WTC11 (cell line): ENCODE measurements at regions of chr1 and their contacts with region 1.

Region 1: DNA sequence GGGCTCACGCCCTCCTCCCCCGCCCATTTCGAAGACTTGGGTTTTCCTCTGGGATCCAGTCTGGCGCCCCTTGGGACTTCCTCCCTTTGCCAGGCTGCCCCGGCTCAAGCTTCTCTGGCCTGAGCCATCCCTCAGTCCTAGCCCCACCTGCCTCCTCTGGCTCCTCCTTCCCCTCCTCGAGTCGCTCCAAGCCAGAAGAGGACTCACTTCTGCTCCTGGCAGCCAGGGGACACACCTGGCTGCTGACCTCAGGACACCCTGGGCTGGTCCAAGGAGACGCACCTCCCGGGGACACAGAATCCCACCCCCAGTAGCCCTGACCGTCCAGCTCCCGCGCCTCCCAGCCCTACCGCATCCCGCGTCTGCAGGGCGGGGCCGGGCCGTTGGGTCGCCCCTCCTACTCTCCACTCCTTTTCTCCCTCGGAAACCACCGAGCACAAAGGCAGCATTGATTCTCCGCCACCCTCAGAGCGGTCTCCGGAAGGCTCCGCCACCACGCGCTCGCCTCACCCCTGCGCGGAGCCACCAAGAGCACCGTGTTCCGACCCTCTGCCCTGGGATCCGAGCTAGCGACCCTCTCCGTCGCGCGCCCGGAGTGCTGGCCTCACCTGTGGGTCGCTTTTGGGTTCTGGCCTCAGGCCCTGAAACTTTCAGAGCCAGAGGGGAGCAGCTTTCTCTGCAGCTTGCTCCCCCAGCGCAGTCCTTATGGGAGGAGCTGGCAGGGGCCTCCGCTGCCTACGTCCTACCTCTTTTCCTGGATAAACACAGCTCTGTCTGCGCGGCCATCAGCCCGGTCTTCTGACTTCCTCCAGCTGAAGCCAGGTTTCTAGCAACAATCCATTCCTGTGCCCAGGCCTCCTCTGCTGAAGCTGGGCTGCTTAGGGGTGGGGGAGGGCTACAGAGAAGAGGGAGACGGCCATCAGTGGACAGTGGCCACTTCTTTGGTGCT is at the start of gene C2CD4D:
- DNase-seq: peak; percentile 82
- ATAC-seq: peak; percentile 77
- H3K4me3 Mint-ChIP-seq: peak within 1 kb of the TSS; percentile 88
- H3K27ac Mint-ChIP-seq: peak within 1 kb of the TSS; percentile 96
- H3K4me1 Mint-ChIP-seq: peaks cover 26% of the 10 kb centered on the region
- H3K27me3 Mint-ChIP-seq: peaks cover 36% of the 10 kb centered on the region
- CTCF ChIP-seq: no peak
- total RNA-seq, gene C2CD4D: 0.85 to 2.0 TPM (median 0.94 TPM) in 3 replicates

Region 2: DNA sequence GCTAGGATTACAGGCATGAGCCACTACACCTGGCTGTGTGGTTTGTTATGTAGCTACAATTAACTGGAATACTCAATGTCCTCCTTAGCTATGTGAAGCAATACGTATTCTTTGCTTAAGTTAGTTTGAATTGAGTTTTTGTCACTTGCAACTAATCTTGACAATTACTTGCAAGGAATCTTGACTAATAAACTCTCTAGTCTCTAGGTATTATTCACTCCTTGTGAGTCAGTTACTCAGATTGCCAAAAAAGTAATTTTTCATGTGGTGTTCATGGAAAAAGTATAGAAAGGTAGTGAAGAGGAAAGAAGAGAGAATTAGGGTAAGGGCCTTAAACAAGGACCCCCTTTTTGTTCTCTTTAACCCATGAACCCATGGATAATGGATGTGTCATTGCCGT is 235.4 kb before region 1 on chr1:
- CTCF ChIA-PET with region 1: no interaction called
- POLR2A ChIA-PET with region 1: no interaction called
- DNase-seq: no peak
- ATAC-seq: no peak
- H3K4me3 Mint-ChIP-seq: no peak overlapping the region
- H3K27ac Mint-ChIP-seq: no peak overlapping the region
- H3K4me1 Mint-ChIP-seq: peaks cover 4% of the 10 kb centered on the region; the same call in 1 of the 2 replicates
- H3K27me3 Mint-ChIP-seq: peaks cover 8% of the 10 kb centered on the region
- CTCF ChIP-seq: no peak

Region 3: DNA sequence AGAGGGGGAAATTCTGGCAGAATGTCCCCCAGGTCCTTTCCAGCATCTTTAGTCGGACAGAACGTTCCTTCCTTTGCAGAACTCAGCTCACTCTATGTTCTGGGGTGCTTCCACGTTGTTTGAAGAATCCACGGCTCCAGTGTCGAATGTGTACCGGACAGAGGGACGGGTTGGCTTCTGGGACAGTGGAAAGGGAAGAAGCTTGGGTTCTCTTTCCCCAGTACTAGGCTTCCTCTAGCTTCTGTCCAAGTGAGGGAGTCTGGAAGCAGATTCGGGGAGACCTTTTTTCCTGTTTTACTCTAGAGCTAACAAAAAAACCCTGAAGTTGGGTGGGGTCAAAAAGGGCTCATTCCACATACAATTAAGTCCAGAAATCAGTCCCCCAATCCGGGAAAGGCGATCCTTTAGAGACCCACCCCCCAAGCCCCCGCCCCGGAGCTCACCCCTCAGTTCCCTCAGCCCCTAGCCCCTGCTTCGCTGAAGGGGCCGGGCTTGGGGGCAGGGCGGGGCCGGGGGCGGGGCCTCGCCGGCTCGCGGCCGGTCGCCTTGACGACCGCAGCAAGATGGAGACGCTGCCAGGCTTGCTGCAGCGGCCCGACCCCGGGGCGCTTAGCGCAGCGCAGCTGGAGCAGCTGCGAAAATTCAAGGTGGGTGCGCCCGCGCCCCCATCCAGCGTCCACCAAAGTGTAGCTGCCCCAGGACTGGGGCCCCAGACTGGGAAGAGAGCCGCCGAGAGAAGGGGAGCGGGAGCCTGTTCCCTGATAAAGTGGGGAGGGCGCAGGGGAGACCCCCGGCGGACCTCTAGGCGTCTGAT is 118.5 kb before region 1 on chr1 and contains the start of gene RIIAD1:
- CTCF ChIA-PET with region 1: interaction called, 24 read pairs
- POLR2A ChIA-PET with region 1: interaction called, 3 read pairs
- DNase-seq: peak; percentile 61
- ATAC-seq: peak; percentile 85
- H3K4me3 Mint-ChIP-seq: peak within 1 kb of the TSS; percentile 76
- H3K27ac Mint-ChIP-seq: no peak within 1 kb of the TSS
- H3K4me1 Mint-ChIP-seq: peaks cover 31% of the 10 kb centered on the region
- H3K27me3 Mint-ChIP-seq: peaks cover 81% of the 10 kb centered on the region
- CTCF ChIP-seq: no peak
- total RNA-seq, gene RIIAD1: 0.92 TPM in 1 of 3 replicates, not detected in the others

Region 4: DNA sequence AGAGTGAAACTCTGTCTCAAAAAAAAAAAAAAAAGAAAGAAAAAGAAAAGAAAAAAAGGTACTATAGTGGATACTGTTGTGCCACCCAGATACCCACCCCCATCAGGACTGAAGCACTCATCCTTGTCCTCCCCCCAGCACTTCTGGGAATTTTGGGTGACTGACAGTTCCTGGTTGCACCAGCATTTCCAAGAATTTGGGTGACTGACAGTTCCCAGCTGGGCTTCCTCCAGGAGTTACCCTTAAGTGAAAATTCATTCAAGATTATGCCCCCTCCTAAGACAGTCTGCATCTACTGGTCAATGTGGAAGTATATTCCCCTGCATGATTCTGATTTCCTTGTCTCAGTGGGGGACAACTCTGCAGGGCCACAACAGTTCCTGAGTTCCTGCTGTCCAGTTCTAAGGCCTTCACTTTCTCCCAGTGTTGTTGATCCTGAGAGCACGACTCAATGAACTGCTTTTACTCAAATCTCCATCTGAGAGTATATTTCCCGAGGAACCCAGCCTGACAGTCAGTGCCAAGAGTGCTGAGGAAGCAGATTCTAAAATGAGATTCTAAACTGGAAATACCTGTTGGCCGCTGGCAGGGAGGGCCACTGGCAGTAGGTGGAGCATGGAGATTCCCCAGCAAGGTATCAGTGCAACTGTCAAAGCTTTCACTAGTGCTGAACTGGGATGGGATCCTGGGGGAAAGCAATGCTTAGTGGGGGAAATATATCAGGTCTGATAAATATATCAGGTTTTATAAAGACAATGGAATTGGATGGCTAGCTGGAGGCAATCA is 99.9 kb before region 1 on chr1:
- CTCF ChIA-PET with region 1: interaction called, 11 read pairs
- POLR2A ChIA-PET with region 1: no interaction called
- DNase-seq: no peak
- ATAC-seq: no peak
- H3K4me3 Mint-ChIP-seq: no peak overlapping the region
- H3K27ac Mint-ChIP-seq: no peak overlapping the region
- H3K4me1 Mint-ChIP-seq: peaks cover 9% of the 10 kb centered on the region
- H3K27me3 Mint-ChIP-seq: peaks cover 5% of the 10 kb centered on the region
- CTCF ChIP-seq: no peak

Region 5: GRCh38 chr1:151790071-151790940 is 49.4 kb before region 1 on chr1 and contains the start of gene TDRKH:
- CTCF ChIA-PET with region 1: interaction called, 13 read pairs
- POLR2A ChIA-PET with region 1: interaction called, 5 read pairs
- DNase-seq: peak; percentile 98
- ATAC-seq: peak; percentile 96
- H3K4me3 Mint-ChIP-seq: peak within 1 kb of the TSS; percentile 98
- H3K27ac Mint-ChIP-seq: peak within 1 kb of the TSS; percentile 98
- H3K4me1 Mint-ChIP-seq: peaks cover 17% of the 10 kb centered on the region
- H3K27me3 Mint-ChIP-seq: no peaks in the 10 kb centered on the region; the same call in 1 of the 2 replicates
- CTCF ChIP-seq: no peak
- total RNA-seq, gene TDRKH: 21.8 to 25.3 TPM (median 24.0 TPM) in 3 replicates

Region 6: DNA sequence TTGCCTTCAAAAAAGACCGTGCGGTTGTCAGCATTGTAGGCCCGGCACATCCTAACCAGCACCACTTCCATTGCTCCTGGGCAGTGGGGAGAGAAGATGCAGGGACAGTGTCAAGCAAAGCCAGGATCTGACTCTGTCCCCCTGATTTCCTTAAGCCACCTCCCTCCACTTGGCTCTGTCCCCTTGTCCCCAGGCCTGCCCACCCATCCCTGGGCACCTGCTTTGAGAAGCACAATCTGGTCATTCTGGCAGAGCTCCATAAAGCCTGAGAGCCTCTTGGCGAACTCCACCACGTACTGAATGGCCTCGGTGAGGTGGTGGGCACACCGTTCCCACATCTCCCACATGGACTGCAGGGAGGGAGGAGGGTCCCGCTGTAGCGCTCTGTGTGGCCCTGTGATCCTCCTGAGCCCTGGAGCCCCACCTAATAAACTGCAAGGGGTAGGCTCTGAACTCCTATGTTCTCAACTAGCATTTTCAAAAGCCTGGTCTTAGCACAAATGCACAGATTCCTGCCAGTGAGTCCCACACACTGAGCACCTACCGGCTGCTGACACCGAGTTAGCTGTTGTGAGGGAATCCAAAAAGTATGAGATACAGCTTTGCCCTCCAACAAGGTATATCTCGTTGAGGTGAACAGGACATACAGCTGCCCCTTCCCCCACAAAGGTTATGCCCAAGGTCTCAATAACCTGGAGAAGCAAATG is 26.3 kb before region 1 on chr1:
- CTCF ChIA-PET with region 1: no interaction called
- POLR2A ChIA-PET with region 1: no interaction called
- DNase-seq: no peak
- ATAC-seq: no peak
- H3K4me3 Mint-ChIP-seq: no peak overlapping the region
- H3K27ac Mint-ChIP-seq: no peak overlapping the region
- H3K4me1 Mint-ChIP-seq: peaks cover 14% of the 10 kb centered on the region
- H3K27me3 Mint-ChIP-seq: no peaks in the 10 kb centered on the region
- CTCF ChIP-seq: no peak

Region 7: DNA sequence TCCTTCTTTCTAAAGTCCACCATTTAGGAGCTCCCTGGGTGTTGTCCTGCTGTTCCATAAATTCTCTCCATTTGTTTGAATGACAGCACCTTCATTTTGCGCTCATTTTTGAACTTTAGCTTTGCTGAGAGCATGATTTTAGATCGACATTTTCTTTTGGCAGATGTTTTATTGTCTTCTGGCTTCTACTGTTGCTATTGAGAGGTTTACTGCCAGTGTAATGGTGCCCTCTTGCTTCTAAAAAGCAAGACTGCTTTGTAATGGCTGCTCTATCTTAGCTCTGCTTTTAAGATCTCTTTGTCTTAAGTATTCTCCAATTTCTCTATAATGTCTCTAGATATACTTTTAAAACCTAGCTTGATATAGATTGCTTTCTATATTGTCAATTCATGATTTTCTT is 41.7 kb after region 1 on chr1:
- CTCF ChIA-PET with region 1: interaction called, 10 read pairs
- POLR2A ChIA-PET with region 1: interaction called, 6 read pairs
- DNase-seq: no peak
- ATAC-seq: no peak
- H3K4me3 Mint-ChIP-seq: no peak overlapping the region
- H3K27ac Mint-ChIP-seq: no peak overlapping the region
- H3K4me1 Mint-ChIP-seq: no peaks in the 10 kb centered on the region
- H3K27me3 Mint-ChIP-seq: no peaks in the 10 kb centered on the region; the same call in 1 of the 2 replicates
- CTCF ChIP-seq: no peak